ENCODE measurements at regions of chr19 and their contacts with region 1.

Region 1: DNA sequence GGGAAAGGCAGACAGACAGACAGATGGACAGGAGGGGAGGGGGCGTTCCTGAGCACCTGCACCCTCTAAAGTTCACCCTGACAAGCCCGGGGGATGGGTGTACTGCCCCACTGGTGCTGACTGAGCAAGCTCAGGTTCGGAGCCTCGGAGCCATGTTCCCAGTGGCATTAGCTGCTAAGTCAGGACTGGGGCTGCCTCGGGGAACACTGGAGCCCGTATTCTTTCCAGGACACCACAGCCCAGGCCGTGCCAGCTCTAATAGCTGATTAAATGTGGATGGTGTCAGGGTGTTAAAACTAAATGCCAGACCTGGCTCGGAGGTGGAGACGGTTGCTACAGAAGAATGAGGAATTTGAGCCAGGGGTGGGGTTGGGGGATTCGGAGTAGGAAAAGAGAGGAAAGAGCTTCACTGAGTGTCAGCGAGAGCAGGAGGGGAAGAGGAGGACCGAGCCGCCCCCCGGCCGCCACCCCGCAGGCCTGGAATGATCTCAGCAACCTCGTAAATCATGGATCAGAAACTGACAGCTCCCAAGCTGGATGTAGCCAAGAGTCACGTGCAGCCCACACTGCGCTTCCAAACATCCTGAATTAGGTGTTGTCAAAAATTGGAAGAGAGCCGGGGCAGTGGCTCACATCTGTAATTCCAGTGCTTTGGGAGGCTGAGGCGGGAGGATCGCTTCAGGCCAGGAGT is 10.4 kb downstream of the MAP2K2 start:
- DNase-seq: no peak
- H3K4me3 ChIP-seq: no peak overlapping the region
- H3K27ac ChIP-seq: peak overlapping the region; percentile 11
- H3K27me3 ChIP-seq: no peaks in the 10 kb centered on the region
- CTCF ChIP-seq: no peak

Region 2: DNA sequence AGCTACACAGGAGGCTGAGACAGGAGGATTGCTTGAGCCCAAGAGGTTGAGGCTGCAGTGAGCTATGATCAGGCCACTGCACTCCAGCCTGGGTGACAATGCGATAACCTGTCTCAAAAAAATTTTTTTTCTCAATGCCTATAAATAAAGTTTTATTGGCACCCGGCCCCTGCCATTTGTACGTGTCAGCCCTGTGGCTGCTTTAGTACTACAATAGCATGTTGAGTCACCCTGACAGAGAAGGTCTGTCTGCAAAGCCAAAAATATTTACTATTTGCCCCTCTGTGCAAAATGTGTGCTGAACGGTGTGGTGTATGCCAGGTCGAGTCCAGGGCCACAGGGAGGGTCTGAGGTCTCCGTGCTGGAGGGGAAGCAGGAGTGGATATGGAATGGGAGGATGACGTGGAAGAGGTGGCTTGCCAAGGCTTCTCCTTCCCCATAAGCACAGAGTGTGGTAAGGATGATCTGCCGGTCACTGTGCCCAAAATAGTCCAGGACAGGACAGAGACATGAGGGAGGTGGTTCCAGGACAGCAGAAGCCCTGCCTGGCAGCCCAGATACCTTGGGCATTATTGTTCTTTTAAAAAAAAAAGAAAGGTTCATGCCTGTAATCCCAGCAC is 170.6 kb before region 1 on chr19:
- CTCF ChIA-PET with region 1: no interaction called
- POLR2A ChIA-PET with region 1: interaction called, 11 read pairs
- DNase-seq: no peak
- H3K4me3 ChIP-seq: no peak overlapping the region
- H3K27ac ChIP-seq: no peak overlapping the region
- H3K27me3 ChIP-seq: no peaks in the 10 kb centered on the region
- CTCF ChIP-seq: no peak

Region 3: GRCh38 chr19:4130744-4131438 is 17.3 kb after region 1 on chr19:
- CTCF ChIA-PET with region 1: no interaction called
- POLR2A ChIA-PET with region 1: no interaction called
- DNase-seq: peak; percentile 38
- H3K4me3 ChIP-seq: no peak overlapping the region
- H3K27ac ChIP-seq: peak overlapping the region; percentile 82
- H3K27me3 ChIP-seq: no peaks in the 10 kb centered on the region
- CTCF ChIP-seq: no peak

Region 4: DNA sequence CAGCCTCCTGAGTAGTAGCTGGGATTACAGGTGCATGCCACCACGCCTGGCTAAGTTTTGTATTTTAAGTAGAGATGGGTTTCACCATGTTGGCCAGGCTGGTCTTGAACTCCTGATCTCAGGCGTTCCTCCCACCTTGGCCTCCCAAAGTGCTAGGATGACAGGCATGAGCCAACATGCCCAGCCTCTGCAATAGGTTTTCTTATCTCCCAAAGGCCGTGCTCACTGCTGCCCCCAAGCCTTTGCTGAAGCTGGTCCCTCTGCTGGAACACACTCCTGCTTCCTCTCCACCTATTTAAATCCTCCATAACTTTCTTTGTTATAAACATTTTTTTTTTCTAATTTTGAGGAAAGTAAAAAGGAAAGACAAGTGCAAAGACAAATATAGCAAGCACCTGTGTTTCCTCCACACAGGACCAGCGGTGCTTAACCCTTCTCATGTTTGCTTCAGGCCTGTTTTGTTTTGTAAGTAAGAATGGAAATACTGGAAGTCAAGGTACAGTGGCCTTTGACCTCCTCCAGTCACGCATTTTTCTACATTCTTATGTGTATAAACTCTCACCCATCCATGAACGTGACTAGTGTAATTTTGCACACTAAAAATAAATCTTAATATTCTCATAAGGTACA is 511.3 kb after region 1 on chr19:
- CTCF ChIA-PET with region 1: no interaction called
- POLR2A ChIA-PET with region 1: no interaction called
- DNase-seq: no peak
- H3K4me3 ChIP-seq: no peak overlapping the region
- H3K27ac ChIP-seq: no peak overlapping the region
- H3K27me3 ChIP-seq: peaks cover 15% of the 10 kb centered on the region
- CTCF ChIP-seq: peak; percentile 49

Measured in AG04450 (cell line).